B cell (primary cell): ENCODE measurements at regions of chr3 and their contacts with region 1.

Region 1: DNA sequence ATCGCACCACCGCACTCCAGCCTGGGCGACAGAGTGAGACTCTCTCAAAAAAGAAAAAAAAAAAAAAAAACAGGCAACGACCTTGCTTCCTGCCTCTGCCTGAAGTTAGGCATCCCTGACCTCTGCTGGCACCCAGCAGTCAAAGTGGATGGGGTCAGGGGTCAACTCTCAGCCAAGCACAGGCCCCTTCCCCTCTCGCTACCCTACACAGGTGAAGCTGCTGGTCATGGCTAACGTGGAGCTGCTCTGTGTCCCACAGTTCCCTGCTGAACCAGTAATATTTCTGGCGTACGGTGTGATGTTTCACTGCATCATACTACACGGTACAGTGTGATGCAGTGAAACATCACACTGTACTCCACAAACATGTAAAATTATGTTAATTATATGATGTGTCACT is 13.9 kb upstream of the FRG2C start:
- DNase-seq: no peak
- ATAC-seq: no peak
- H3K4me3 ChIP-seq: no peak overlapping the region
- H3K4me3 Mint-ChIP-seq: no peak overlapping the region
- H3K27ac ChIP-seq: no peak overlapping the region
- H3K27ac Mint-ChIP-seq: no peak overlapping the region
- H3K4me1 ChIP-seq: no peaks in the 10 kb centered on the region
- H3K4me1 Mint-ChIP-seq: no peaks in the 10 kb centered on the region
- H3K27me3 ChIP-seq: no peaks in the 10 kb centered on the region
- H3K27me3 Mint-ChIP-seq: peaks cover 12% of the 10 kb centered on the region
- CTCF ChIP-seq: no peak

Region 2: DNA sequence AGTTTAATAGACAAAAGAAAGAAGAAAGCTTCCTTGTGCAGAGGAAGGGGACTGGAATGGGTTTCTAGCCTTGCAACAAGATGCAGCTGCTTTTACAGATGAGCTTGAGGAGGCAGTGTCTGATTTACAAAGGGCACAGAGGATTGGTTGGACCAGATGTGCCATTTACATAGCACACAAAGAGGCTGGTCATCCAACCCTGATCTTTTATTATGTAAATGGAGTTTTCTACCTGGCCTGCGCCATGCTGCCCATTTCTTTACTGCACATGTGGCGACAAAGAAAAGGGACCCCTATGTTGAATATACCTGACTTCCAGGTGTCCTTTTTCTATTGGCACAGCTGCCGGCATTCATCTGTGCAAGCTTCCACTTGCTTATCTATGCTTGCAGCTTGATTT is 395.5 kb before region 1 on chr3:
- CTCF ChIA-PET with region 1: no interaction called
- POLR2A ChIA-PET with region 1: no interaction called
- intact Hi-C with region 1: loop called (anchors 10 kb)
- DNase-seq: no peak
- ATAC-seq: no peak
- H3K4me3 ChIP-seq: no peak overlapping the region
- H3K4me3 Mint-ChIP-seq: no peak overlapping the region
- H3K27ac ChIP-seq: no peak overlapping the region
- H3K27ac Mint-ChIP-seq: no peak overlapping the region
- H3K4me1 ChIP-seq: no peaks in the 10 kb centered on the region
- H3K4me1 Mint-ChIP-seq: no peaks in the 10 kb centered on the region
- H3K27me3 ChIP-seq: no peaks in the 10 kb centered on the region
- H3K27me3 Mint-ChIP-seq: no peaks in the 10 kb centered on the region
- CTCF ChIP-seq: no peak